AG04450 (cell line): ENCODE measurements at regions of chr3 and their contacts with region 1.

Region 1: GRCh38 chr3:156449712-156450574 is 105.0 kb downstream of the SSR3 start:
- DNase-seq: no peak
- H3K4me3 ChIP-seq: no peak overlapping the region
- H3K27ac ChIP-seq: no peak overlapping the region
- H3K27me3 ChIP-seq: peaks cover 6% of the 10 kb centered on the region
- CTCF ChIP-seq: peak; percentile 62

Region 2: DNA sequence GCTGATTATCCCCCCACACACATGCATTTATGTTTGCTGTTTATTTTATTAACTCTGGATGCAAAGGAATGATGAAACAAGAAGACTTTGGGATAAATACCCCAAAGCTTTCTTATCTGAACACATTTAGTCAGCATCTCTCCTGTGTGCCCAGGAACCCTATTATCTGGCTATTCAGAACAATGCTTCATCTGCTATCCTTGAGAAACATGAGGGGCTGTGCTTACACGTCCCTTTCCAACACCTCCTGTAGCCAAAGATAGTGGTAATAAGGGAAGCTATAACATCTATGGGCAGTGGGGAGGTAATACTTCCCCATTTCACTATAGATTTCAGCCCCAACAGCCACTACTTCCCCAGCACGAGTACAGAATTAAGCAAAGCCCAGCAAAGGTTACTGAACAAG is 10.3 kb after region 1 on chr3:
- CTCF ChIA-PET with region 1: interaction called, 20 read pairs
- POLR2A ChIA-PET with region 1: no interaction called
- DNase-seq: no peak
- H3K4me3 ChIP-seq: no peak overlapping the region
- H3K27ac ChIP-seq: no peak overlapping the region
- H3K27me3 ChIP-seq: peaks cover 4% of the 10 kb centered on the region
- CTCF ChIP-seq: no peak

Region 3: GRCh38 chr3:156474560-156475389 is 24.8 kb after region 1 on chr3:
- CTCF ChIA-PET with region 1: interaction called, 12 read pairs
- POLR2A ChIA-PET with region 1: no interaction called
- DNase-seq: no peak
- H3K4me3 ChIP-seq: no peak overlapping the region
- H3K27ac ChIP-seq: no peak overlapping the region
- H3K27me3 ChIP-seq: peaks cover 2% of the 10 kb centered on the region
- CTCF ChIP-seq: peak; percentile 44

Region 4: GRCh38 chr3:156483961-156484787 is 34.2 kb after region 1 on chr3:
- CTCF ChIA-PET with region 1: interaction called, 14 read pairs
- POLR2A ChIA-PET with region 1: no interaction called
- DNase-seq: no peak
- H3K4me3 ChIP-seq: no peak overlapping the region
- H3K27ac ChIP-seq: no peak overlapping the region
- H3K27me3 ChIP-seq: no peaks in the 10 kb centered on the region
- CTCF ChIP-seq: no peak